ENCODE measurements at regions of chr19 and their contacts with region 1.

Region 1: GRCh38 chr19:16504271-16504670 is 8.1 kb downstream of the C19orf44 start:
- DNase-seq: no peak
- H3K4me3 ChIP-seq: no peak overlapping the region
- H3K27ac ChIP-seq: no peak overlapping the region
- H3K4me1 ChIP-seq: no peaks in the 10 kb centered on the region
- H3K27me3 ChIP-seq: no peaks in the 10 kb centered on the region
- CTCF ChIP-seq: no peak
- EP300 ChIP-seq: no peak
- POLR2A ChIP-seq: no peak
- RAD21 ChIP-seq: no peak

Region 2: GRCh38 chr19:16528073-16528472 is 23.8 kb after region 1 on chr19:
- CTCF ChIA-PET with region 1: interaction called, 10 read pairs
- POLR2A ChIA-PET with region 1: interaction called, 4 read pairs
- DNase-seq: peak in 1 of 2 experiments; percentile 70
- H3K4me3 ChIP-seq: no peak overlapping the region
- H3K27ac ChIP-seq: no peak overlapping the region
- H3K4me1 ChIP-seq: no peaks in the 10 kb centered on the region
- H3K27me3 ChIP-seq: no peaks in the 10 kb centered on the region
- CTCF ChIP-seq: peak; percentile 52 to 81 (median 80)
- EP300 ChIP-seq: no peak
- POLR2A ChIP-seq: no peak
- RAD21 ChIP-seq: peak; percentile 40 to 64